CD4-positive, alpha-beta T cell (primary cell): ENCODE measurements at regions of chr22 and their contacts with region 1.

Region 1: GRCh38 chr22:46013460-46014416 is 36.8 kb upstream of the WNT7B start:
- DNase-seq: peak; percentile 66 to 94 (median 84)
- ATAC-seq: peak; percentile 83
- H3K4me3 ChIP-seq: peak overlapping the region; percentile 94
- H3K4me3 Mint-ChIP-seq: peak overlapping the region; percentile 89
- H3K27ac ChIP-seq: peak overlapping the region; percentile 58 to 87
- H3K27ac Mint-ChIP-seq: peak overlapping the region; percentile 86
- H3K4me1 ChIP-seq: peaks cover 20% of the 10 kb centered on the region
- H3K4me1 Mint-ChIP-seq: peaks cover 12% of the 10 kb centered on the region
- H3K27me3 ChIP-seq: peaks cover 0 to 2% of the 10 kb centered on the region in 2 experiments
- H3K27me3 Mint-ChIP-seq: no peaks in the 10 kb centered on the region
- CTCF ChIP-seq: peak; percentile 77

Region 2: GRCh38 chr22:46044621-46045438 is 31.1 kb after region 1 on chr22:
- CTCF ChIA-PET with region 1: no interaction called
- POLR2A ChIA-PET with region 1: interaction called, 17 read pairs
- intact Hi-C with region 1: no loop called
- DNase-seq: peak in 10 of 14 experiments; percentile 21 to 60 (median 42)
- ATAC-seq: peak; percentile 59
- H3K4me3 ChIP-seq: peak overlapping the region; percentile 52
- H3K4me3 Mint-ChIP-seq: peak overlapping the region; percentile 92
- H3K27ac ChIP-seq: peak overlapping the region; percentile 48 to 55
- H3K27ac Mint-ChIP-seq: peak overlapping the region; percentile 90
- H3K4me1 ChIP-seq: peaks cover 41% of the 10 kb centered on the region
- H3K4me1 Mint-ChIP-seq: peaks cover 34% of the 10 kb centered on the region
- H3K27me3 ChIP-seq: no peaks in the 10 kb centered on the region
- H3K27me3 Mint-ChIP-seq: no peaks in the 10 kb centered on the region
- CTCF ChIP-seq: no peak

Region 3: GRCh38 chr22:46071451-46072109 is 57.8 kb after region 1 on chr22:
- CTCF ChIA-PET with region 1: no interaction called
- POLR2A ChIA-PET with region 1: interaction called, 3 read pairs
- intact Hi-C with region 1: loop called in 1 of 2 experiments (anchors 2 kb)
- DNase-seq: peak; percentile 45 to 80 (median 60)
- ATAC-seq: peak; percentile 28
- H3K4me3 ChIP-seq: peak overlapping the region; percentile 38
- H3K4me3 Mint-ChIP-seq: peak overlapping the region; percentile 90
- H3K27ac ChIP-seq: peak overlapping the region in 1 of 2 donors; percentile 46
- H3K27ac Mint-ChIP-seq: peak overlapping the region; percentile 78
- H3K4me1 ChIP-seq: peaks cover 56% of the 10 kb centered on the region
- H3K4me1 Mint-ChIP-seq: peaks cover 55% of the 10 kb centered on the region
- H3K27me3 ChIP-seq: peaks cover 0 to 10% of the 10 kb centered on the region in 2 experiments
- H3K27me3 Mint-ChIP-seq: no peaks in the 10 kb centered on the region
- CTCF ChIP-seq: no peak

Region 4: DNA sequence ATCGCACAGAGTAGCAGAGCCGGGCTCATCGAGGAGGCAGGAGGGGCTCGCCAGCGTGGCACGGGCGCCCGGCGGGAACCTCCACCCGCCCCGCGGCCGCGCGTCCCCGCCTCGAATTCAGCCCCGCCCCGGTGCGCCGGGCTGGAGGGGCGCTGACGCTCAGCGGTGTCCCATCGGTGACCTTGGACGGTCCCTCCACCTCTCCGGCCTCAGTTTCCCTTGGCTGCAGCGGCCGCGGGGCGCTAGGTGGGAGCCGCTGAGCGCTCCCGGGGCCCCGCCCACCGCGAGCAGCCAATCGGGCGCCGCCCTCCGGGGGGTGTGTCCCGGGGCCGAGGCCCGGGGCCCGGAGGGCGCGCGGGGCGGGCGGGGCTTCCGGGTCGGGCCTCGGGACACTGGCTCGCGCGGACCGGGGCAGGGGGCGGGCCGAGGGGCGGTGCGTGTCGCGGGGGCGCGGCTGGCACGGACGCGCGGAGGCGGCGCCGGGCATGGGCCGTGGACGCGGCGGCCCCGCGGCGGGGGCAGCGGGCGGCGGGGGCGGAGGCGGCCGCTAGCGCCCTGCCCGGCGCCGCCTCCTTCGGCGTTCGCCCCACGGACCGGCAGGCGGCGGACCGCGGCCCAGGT is 136.4 kb after region 1 on chr22 and contains the start of gene PPARA:
- CTCF ChIA-PET with region 1: no interaction called
- POLR2A ChIA-PET with region 1: no interaction called
- intact Hi-C with region 1: no loop called
- DNase-seq: peak; percentile 63 to 96 (median 88)
- ATAC-seq: peak; percentile 75
- H3K4me3 ChIP-seq: peak within 1 kb of the TSS; percentile 87
- H3K4me3 Mint-ChIP-seq: peak within 1 kb of the TSS; percentile 89
- H3K27ac ChIP-seq: peak within 1 kb of the TSS; percentile 21 to 58
- H3K27ac Mint-ChIP-seq: peak within 1 kb of the TSS; percentile 74
- H3K4me1 ChIP-seq: peaks cover 32% of the 10 kb centered on the region
- H3K4me1 Mint-ChIP-seq: peaks cover 14% of the 10 kb centered on the region
- H3K27me3 ChIP-seq: no peaks in the 10 kb centered on the region
- H3K27me3 Mint-ChIP-seq: no peaks in the 10 kb centered on the region
- CTCF ChIP-seq: no peak
- total RNA-seq, gene PPARA: 9.1 to 9.3 TPM